ENCODE measurements at regions of chrX and their contacts with region 1.

Region 1: GRCh38 chrX:1591102-1591900 is at the start of gene AKAP17A:
- DNase-seq: peak; percentile 96 to 99
- ATAC-seq: peak; percentile 97
- H3K4me3 ChIP-seq: peak within 1 kb of the TSS; percentile 89 to 93
- H3K27ac ChIP-seq: peak within 1 kb of the TSS in 1 of 2 donors; percentile 14
- H3K4me1 ChIP-seq: no peaks in the 10 kb centered on the region
- H3K27me3 ChIP-seq: no peaks in the 10 kb centered on the region
- total RNA-seq, gene AKAP17A: 33.0 to 53.7 TPM

Region 2: DNA sequence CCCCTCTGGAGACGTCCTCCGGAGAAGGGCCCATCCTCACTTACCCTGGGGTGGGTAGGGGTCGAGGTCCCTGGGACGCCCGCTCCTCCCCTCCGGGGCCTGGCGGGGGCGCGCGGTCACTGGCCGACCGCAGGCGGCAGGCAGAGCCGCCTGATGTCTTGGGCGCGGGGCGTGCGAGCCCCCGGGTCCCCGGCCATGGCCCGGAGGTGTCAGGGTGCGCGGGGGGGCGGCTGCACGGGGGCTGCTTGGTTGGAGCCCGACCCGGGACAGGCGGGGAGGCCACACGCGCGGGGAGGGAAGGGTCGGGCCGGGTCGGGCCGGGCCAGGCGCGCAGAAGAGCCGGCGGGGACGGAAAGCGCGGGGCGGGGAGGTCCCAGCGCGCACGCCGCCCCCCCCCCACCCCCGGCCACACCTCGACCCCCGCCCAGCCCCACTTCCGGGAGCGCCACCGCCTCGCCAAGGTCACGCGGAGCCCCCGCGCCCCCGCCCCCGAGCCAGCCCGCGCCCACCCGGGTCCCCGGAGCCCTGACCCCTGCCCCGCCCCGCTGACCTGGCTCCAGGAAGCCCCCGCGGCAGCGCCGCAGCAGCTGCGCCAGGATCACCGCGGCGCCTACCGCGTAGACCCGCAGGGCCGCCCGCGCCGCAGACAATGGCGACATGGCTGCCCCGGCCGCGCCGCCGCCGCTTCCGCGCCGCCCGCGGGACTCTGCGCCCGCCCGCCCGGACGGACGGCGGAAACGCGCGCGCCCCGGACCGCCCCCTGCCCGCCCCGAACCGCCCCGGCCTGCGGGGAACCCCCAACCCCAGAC is 909.2 kb after region 1 on chrX and contains the starts of genes DHRSX and ZBED1:
- intact Hi-C with region 1: loop called in 1 of 2 experiments (anchors 10 kb)
- DNase-seq: peak; percentile 65 to 85
- ATAC-seq: peak; percentile 40
- H3K4me3 ChIP-seq: peak within 1 kb of the TSS; percentile 91 to 99
- H3K27ac ChIP-seq: peak within 1 kb of the TSS in 1 of 2 donors; percentile 42
- H3K4me1 ChIP-seq: no peaks in the 10 kb centered on the region
- H3K27me3 ChIP-seq: no peaks in the 10 kb centered on the region
- total RNA-seq, gene DHRSX: 15.7 to 21.8 TPM
- total RNA-seq, gene ZBED1: 31.3 to 33.5 TPM